ENCODE measurements at regions of chr16 and their contacts with region 1.

Region 1: GRCh38 chr16:48687421-48688038 is 77.5 kb upstream of the N4BP1 start:
- DNase-seq: peak; percentile 27 to 60
- ATAC-seq: peak; percentile 43 to 68 (median 56)
- H3K4me3 ChIP-seq: no peak overlapping the region
- H3K27ac ChIP-seq: no peak overlapping the region
- H3K4me1 ChIP-seq: no peaks in the 10 kb centered on the region
- H3K27me3 ChIP-seq: peaks cover 0 to 3% (median 0%) of the 10 kb centered on the region in 3 donors
- CTCF ChIP-seq: peak; percentile 73

Region 2: GRCh38 chr16:47644166-47644565 is 1043.4 kb before region 1 on chr16:
- intact Hi-C with region 1: no loop called
- DNase-seq: no peak
- ATAC-seq: peak in 2 of 4 donors; percentile 30 to 49
- H3K4me3 ChIP-seq: no peak overlapping the region
- H3K27ac ChIP-seq: no peak overlapping the region
- H3K4me1 ChIP-seq: peaks cover 14% of the 10 kb centered on the region
- H3K27me3 ChIP-seq: no peaks in the 10 kb centered on the region
- CTCF ChIP-seq: no peak

Region 3: GRCh38 chr16:48632137-48632774 is 55.3 kb before region 1 on chr16:
- intact Hi-C with region 1: no loop called
- DNase-seq: no peak
- ATAC-seq: no peak
- H3K4me3 ChIP-seq: no peak overlapping the region
- H3K27ac ChIP-seq: no peak overlapping the region
- H3K4me1 ChIP-seq: no peaks in the 10 kb centered on the region
- H3K27me3 ChIP-seq: peaks cover 0 to 3% (median 0%) of the 10 kb centered on the region in 3 donors
- CTCF ChIP-seq: no peak

Region 4: GRCh38 chr16:48734220-48734859 is 46.8 kb after region 1 on chr16:
- intact Hi-C with region 1: no loop called
- DNase-seq: no peak
- ATAC-seq: no peak
- H3K4me3 ChIP-seq: no peak overlapping the region
- H3K27ac ChIP-seq: no peak overlapping the region
- H3K4me1 ChIP-seq: peaks cover 4% of the 10 kb centered on the region
- H3K27me3 ChIP-seq: no peaks in the 10 kb centered on the region
- CTCF ChIP-seq: no peak

Region 5: DNA sequence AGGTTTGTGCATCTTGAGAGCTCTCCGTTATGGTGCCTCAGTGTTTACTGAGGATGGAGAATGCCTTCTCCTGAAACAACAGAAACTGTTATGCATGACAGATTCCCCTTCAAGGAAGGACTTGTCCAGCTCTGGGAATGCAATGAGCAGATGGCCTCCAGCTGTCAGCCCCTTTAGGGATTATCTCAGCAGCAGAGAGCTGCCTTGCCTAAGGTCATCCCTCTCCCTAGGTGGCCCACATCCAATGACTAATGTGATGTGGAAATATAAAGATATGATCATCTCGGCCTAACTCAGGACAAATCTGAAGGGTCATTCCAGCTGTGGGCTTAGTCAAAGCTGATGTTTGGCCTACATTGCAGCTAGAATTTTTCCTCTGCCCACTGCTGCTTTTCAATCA is 136.7 kb after region 1 on chr16:
- intact Hi-C with region 1: no loop called
- DNase-seq: no peak
- ATAC-seq: no peak
- H3K4me3 ChIP-seq: no peak overlapping the region
- H3K27ac ChIP-seq: no peak overlapping the region
- H3K4me1 ChIP-seq: no peaks in the 10 kb centered on the region
- H3K27me3 ChIP-seq: no peaks in the 10 kb centered on the region
- CTCF ChIP-seq: no peak

Region 6: GRCh38 chr16:49183911-49184310 is 496.4 kb after region 1 on chr16:
- intact Hi-C with region 1: loop called in 1 of 2 experiments (anchors 5 kb)
- DNase-seq: no peak
- ATAC-seq: no peak
- H3K4me3 ChIP-seq: no peak overlapping the region
- H3K27ac ChIP-seq: no peak overlapping the region
- H3K4me1 ChIP-seq: no peaks in the 10 kb centered on the region
- H3K27me3 ChIP-seq: no peaks in the 10 kb centered on the region
- CTCF ChIP-seq: peak; percentile 29

Region 7: GRCh38 chr16:49350265-49351095 is 663.0 kb after region 1 on chr16:
- intact Hi-C with region 1: loop called (anchors 1 to 5 kb)
- DNase-seq: peak; percentile 59 to 74
- ATAC-seq: peak; percentile 54 to 64 (median 59)
- H3K4me3 ChIP-seq: no peak overlapping the region
- H3K27ac ChIP-seq: no peak overlapping the region
- H3K4me1 ChIP-seq: no peaks in the 10 kb centered on the region
- H3K27me3 ChIP-seq: peaks cover 0 to 26% (median 5%) of the 10 kb centered on the region in 3 donors
- CTCF ChIP-seq: peak; percentile 83

Measured in psoas muscle (tissue), 8 donors.